ENCODE measurements at regions of chr12 and their contacts with region 1.

Region 1: DNA sequence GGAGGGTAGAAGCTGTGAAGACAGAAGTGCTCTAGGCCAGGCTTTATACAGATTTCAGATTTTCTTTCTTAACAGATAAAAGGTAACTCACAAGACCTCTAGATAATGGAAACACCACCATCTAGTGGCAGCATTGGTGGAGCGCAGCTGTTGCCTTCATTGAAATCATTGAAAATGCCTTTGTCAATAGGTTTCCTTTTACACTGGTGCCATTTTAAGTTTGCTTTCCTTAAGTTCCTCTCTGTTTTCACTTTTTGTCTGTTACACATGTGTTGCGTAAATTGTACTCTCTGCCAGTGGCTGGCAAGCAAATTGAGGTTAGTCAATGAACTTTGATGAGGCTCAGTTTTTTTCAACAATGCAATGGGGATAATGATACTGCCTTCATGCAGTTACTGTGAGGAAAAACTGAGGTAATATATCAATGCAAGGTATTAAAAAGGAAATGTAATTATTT is 31.1 kb downstream of the ALDH1L2 start:
- DNase-seq: peak; percentile 66
- ATAC-seq: peak; percentile 64
- H3K4me3 ChIP-seq: no peak overlapping the region
- H3K27ac ChIP-seq: no peak overlapping the region
- H3K4me1 ChIP-seq: no peaks in the 10 kb centered on the region
- H3K27me3 ChIP-seq: no peaks in the 10 kb centered on the region
- CTCF ChIP-seq: peak; percentile 88
- EP300 ChIP-seq: no peak
- POLR2A ChIP-seq: no peak
- RAD21 ChIP-seq: peak; percentile 69

Region 2: GRCh38 chr12:104201238-104202001 is 851.7 kb before region 1 on chr12:
- CTCF ChIA-PET with region 1: interaction called, 9 read pairs
- POLR2A ChIA-PET with region 1: no interaction called
- in situ Hi-C with region 1: no loop called
- intact Hi-C with region 1: loop called (anchors 2 kb)
- DNase-seq: peak; percentile 55
- ATAC-seq: peak; percentile 90
- H3K4me3 ChIP-seq: no peak overlapping the region
- H3K27ac ChIP-seq: no peak overlapping the region
- H3K4me1 ChIP-seq: no peaks in the 10 kb centered on the region
- H3K27me3 ChIP-seq: peaks cover 0 to 9% of the 10 kb centered on the region in 2 experiments; a peak in 3 of 5 replicates
- CTCF ChIP-seq: peak; percentile 90
- EP300 ChIP-seq: no peak
- POLR2A ChIP-seq: no peak
- RAD21 ChIP-seq: peak; percentile 82

Region 3: DNA sequence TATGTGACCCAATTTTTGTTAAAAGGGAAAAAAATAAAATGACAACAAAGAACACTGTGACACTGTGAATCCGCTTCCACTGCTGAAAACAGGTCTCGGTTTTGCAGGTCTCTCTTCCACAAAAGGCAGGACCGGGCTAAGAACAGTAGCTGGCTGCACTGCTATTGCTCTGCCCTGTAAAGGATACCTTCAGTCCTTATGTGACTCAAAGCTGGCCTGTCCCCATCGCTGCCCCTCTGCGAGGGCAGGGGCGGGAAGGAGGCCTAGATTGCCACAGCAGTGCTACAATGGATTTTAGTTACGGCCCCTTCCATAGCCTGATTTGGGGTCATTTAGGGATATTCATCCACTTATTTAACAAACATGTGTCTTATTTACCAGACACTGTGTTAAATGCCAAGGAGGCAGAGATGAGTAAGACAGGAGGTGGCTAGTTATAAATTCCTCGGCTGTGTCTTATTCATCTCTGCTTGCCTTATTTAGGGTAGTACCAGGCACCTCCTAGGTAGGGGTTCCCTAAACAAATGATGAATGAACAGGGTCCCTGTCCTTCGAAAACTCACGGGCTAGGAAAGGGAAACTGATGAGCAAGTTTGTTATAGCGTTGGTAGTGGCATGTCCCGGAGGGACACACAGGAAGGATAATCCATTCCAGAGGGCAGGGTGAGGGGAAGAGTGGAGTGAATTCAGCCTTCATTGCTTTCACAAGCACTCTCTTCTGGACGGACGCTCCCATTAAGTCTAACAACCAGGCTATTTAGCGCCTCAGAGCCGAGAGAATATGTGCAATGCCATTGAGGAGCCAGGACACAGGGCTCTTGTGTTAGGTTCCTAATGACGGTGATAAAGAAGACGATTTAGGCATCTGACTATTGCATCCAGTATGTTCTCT is 676.2 kb before region 1 on chr12:
- CTCF ChIA-PET with region 1: interaction called, 22 read pairs
- POLR2A ChIA-PET with region 1: no interaction called
- in situ Hi-C with region 1: loop called (anchors 5 kb)
- intact Hi-C with region 1: loop called (anchors 1 kb)
- DNase-seq: no peak
- ATAC-seq: no peak
- H3K4me3 ChIP-seq: no peak overlapping the region
- H3K27ac ChIP-seq: no peak overlapping the region
- H3K4me1 ChIP-seq: no peaks in the 10 kb centered on the region
- H3K27me3 ChIP-seq: no peaks in the 10 kb centered on the region; a peak in 2 of 5 replicates
- CTCF ChIP-seq: no peak
- EP300 ChIP-seq: no peak
- POLR2A ChIP-seq: no peak
- RAD21 ChIP-seq: no peak

Region 4: DNA sequence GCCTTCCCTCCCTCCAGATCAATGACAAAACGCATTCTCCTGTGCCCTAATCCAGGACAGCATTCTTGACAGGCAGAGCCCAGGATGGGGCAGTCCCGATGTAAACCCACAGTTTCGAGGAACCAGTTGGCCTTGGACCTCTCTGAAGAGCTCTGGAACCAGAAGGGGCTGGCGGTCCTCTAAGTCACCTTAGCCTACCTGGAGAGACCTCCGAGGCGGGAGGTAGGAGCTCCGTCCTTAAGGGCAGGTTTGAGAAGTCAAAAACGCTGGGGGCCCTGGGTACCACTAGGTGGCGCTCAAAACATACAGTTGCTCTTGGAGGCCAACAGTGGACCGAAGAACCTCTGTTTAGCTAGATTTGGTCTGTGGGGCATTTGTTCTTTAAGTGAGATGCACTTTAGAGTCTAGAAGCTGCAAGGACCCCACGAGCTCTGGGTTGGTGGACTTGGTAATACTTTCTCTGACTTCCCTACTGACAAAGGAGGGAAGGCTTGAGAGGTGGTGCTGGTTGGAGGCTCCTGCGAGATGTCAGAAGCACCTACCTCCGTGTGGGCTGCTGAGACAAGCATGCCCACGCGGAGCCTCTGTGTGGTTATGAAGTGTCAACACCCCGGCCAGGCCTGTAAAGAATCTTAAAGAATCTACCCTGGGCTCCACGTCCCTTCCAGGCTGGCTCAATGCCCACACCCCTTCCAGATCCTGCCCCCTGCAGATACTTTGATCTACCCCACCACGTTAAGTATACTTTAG is 671.2 kb before region 1 on chr12:
- CTCF ChIA-PET with region 1: interaction called, 22 read pairs
- POLR2A ChIA-PET with region 1: no interaction called
- in situ Hi-C with region 1: loop called (anchors 5 kb)
- intact Hi-C with region 1: loop called (anchors 1 kb)
- DNase-seq: peak; percentile 48
- ATAC-seq: peak; percentile 94
- H3K4me3 ChIP-seq: no peak overlapping the region
- H3K27ac ChIP-seq: no peak overlapping the region
- H3K4me1 ChIP-seq: no peaks in the 10 kb centered on the region
- H3K27me3 ChIP-seq: no peaks in the 10 kb centered on the region; a peak in 1 of 5 replicates
- CTCF ChIP-seq: peak; percentile 90
- EP300 ChIP-seq: no peak
- POLR2A ChIP-seq: no peak
- RAD21 ChIP-seq: peak; percentile 78

Region 5: GRCh38 chr12:104790296-104791125 is 262.6 kb before region 1 on chr12:
- CTCF ChIA-PET with region 1: no interaction called
- POLR2A ChIA-PET with region 1: no interaction called
- in situ Hi-C with region 1: no loop called
- intact Hi-C with region 1: loop called (anchors 5 kb)
- DNase-seq: peak; percentile 5
- ATAC-seq: peak; percentile 94
- H3K4me3 ChIP-seq: peak overlapping the region in 1 of 3 experiments; percentile 11; a peak in 2 of 6 replicates
- H3K27ac ChIP-seq: no peak overlapping the region
- H3K4me1 ChIP-seq: 0 out of 2 replicates have a peak, but pooled peaks cover 8% of the 10 kb centered on the region
- H3K27me3 ChIP-seq: peaks cover 0 to 10% of the 10 kb centered on the region in 2 experiments; a peak in 2 of 5 replicates
- CTCF ChIP-seq: peak; percentile 80
- EP300 ChIP-seq: no peak
- POLR2A ChIP-seq: no peak
- RAD21 ChIP-seq: no peak